ENCODE measurements at regions of chr20 and their contacts with region 1.

Region 1: GRCh38 chr20:41136680-41137613 is at the start of gene PLCG1:
- DNase-seq: peak; percentile 80 to 86 (median 83)
- H3K4me3 ChIP-seq: peak within 1 kb of the TSS; percentile 85
- H3K4me3 Mint-ChIP-seq: peak within 1 kb of the TSS; percentile 89 to 98 (median 94)
- H3K27ac ChIP-seq: peak within 1 kb of the TSS; percentile 80
- H3K27ac Mint-ChIP-seq: peak within 1 kb of the TSS; percentile 92 to 99 (median 96)
- H3K4me1 ChIP-seq: peaks cover 63% of the 10 kb centered on the region
- H3K4me1 Mint-ChIP-seq: peaks cover 57 to 66% (median 63%) of the 10 kb centered on the region in 3 donors
- H3K27me3 ChIP-seq: no peaks in the 10 kb centered on the region
- H3K27me3 Mint-ChIP-seq: peaks cover 0 to 4% of the 10 kb centered on the region in 2 donors
- total RNA-seq, gene PLCG1: 104 to 108 TPM

Region 2: DNA sequence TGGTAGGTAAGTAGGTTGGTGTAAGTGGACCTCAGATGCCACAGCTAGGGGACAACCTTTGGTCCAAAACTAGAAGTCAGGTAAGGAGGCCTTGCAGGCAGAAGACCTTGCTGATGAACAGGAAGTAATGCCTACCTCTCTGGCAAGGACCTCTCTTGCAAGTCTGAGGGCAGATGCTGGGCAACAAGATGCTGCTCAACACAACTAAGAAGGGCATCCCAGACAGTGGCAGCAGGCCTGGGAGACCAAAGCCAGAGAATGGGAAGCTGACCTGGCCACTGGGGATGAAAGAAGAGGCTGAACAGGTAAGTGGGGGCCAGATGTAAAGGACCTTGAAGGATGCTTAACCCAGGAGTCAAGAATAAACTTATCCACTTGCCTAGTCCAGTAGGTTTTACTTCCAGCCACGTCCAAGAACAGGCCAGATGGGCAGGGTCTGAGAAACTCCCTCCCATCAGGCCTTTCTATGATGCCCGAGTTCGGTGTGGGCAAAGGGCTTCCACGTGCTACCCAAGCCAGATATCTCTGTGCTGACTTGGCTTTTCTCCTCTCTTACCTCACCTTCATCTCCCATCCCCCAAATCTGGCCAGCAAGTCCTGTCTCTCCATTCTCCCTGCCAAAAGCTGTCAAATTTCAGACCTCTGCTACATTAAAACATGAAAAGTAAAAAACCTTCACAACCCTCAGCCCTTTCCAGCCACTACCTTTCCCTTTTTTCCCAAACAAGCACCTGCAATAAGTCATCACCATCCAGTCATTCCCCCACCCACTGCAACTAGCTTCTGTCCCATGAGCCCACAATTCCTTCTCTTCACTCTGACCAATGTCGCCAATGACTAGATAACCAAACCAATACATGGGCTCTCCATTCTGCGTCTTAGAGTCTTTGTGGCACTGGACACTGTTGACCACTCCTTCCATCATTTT is 11.2 kb before region 1 on chr20:
- CTCF ChIA-PET with region 1: interaction called, 12 read pairs
- POLR2A ChIA-PET with region 1: no interaction called
- DNase-seq: no peak
- H3K4me3 ChIP-seq: no peak overlapping the region
- H3K4me3 Mint-ChIP-seq: no peak overlapping the region
- H3K27ac ChIP-seq: no peak overlapping the region
- H3K27ac Mint-ChIP-seq: peak overlapping the region; percentile 1 to 59 (median 40)
- H3K4me1 ChIP-seq: no peaks in the 10 kb centered on the region
- H3K4me1 Mint-ChIP-seq: peaks cover 0 to 9% (median 7%) of the 10 kb centered on the region in 3 donors
- H3K27me3 ChIP-seq: no peaks in the 10 kb centered on the region
- H3K27me3 Mint-ChIP-seq: no peaks in the 10 kb centered on the region

Region 3: GRCh38 chr20:41173161-41173721 is 36.3 kb after region 1 on chr20:
- CTCF ChIA-PET with region 1: interaction called, 38 read pairs
- POLR2A ChIA-PET with region 1: interaction called, 5 read pairs
- DNase-seq: peak; percentile 43 to 69 (median 49)
- H3K4me3 ChIP-seq: no peak overlapping the region
- H3K4me3 Mint-ChIP-seq: no peak overlapping the region
- H3K27ac ChIP-seq: no peak overlapping the region
- H3K27ac Mint-ChIP-seq: peak overlapping the region; percentile 57 to 98 (median 82)
- H3K4me1 ChIP-seq: no peaks in the 10 kb centered on the region
- H3K4me1 Mint-ChIP-seq: peaks cover 25 to 32% (median 28%) of the 10 kb centered on the region in 3 donors
- H3K27me3 ChIP-seq: no peaks in the 10 kb centered on the region
- H3K27me3 Mint-ChIP-seq: no peaks in the 10 kb centered on the region

Region 4: DNA sequence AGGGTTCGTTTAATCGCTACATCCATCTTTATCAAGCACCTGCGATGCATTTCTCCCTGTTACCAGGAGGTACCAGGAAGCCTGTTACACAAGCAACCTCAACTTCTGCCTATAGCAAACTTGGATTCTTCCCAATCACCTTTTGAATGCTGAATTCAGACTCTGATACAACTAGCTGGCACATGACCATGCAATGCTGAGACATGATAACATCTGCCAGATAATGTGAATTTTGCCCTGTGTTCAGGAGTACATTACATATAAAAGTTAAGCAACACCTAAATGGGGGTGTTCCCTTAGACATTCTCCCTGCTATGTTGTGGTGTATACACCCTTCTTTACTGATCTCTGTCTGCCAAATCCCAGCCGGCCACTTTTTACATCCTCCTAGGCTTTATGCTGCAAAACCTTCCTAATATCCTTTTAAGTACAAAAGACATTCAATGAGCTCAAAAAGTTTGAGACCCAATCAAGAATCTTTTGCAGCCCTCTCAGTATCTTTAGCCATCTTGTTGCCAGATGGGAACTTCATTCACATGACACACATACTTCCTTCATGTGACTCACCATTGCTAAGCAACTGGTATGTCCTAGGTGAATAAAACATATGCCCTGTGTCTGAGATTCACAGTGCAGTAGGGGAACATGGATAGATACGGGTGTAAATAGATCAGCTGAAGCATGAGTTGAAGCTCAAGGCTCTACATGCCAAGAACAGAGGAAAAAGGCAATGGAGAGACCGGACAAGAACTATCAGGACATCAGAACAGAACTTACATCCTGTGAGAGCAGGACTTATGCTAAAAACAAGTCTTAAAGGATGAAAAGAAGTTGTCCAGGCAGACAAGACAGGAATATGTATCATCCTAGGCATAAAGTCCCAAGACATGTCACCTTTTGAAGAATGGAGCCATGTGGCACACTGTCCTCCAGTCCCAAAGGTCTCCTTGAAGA is 96.3 kb after region 1 on chr20:
- CTCF ChIA-PET with region 1: interaction called, 89 read pairs
- POLR2A ChIA-PET with region 1: interaction called, 5 read pairs
- DNase-seq: no peak
- H3K4me3 ChIP-seq: no peak overlapping the region
- H3K4me3 Mint-ChIP-seq: no peak overlapping the region
- H3K27ac ChIP-seq: no peak overlapping the region
- H3K27ac Mint-ChIP-seq: peak overlapping the region in 2 of 8 donors; percentile 5 to 29
- H3K4me1 ChIP-seq: peaks cover 7% of the 10 kb centered on the region
- H3K4me1 Mint-ChIP-seq: peaks cover 16 to 22% (median 18%) of the 10 kb centered on the region in 3 donors
- H3K27me3 ChIP-seq: no peaks in the 10 kb centered on the region
- H3K27me3 Mint-ChIP-seq: no peaks in the 10 kb centered on the region

Region 5: DNA sequence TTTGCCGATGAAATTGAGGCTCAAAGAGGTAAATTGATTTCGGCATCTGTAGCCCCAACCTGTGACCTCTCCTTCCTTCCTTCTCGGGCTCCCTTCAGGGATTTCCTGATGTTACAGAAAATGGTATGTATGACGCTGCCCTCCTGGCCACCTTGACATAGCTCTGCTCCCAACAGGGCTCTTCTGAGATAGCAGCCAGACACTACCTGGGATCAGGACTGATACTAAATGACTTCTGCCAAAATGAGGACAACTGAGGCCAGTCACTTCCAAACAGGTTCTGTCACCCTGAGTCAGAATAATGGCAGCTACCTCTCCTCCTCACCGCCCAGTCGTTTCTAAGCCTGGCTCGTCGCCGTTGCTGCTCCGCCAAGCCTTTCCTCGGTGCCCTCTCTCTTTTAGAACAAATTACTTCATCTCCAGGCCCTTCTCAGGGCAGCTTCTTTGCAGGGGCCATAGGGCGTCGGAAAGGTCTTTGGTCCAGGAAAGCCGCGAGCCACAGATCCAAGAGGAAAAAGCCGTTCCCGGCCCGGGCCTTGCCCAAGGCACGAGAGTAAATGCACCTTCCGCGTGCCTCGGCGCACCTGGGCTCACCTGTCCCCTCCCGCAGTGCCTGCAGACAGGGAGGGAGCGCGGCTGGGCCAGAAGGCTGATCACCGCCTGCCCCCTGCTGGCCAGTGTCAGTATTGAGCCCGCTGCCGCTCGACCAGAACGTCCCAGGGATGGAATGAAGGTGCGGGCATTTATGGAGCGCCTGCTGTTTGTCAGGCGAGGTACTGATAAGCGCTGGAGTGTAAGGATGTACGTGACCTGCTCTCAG is 202.8 kb after region 1 on chr20:
- CTCF ChIA-PET with region 1: interaction called, 82 read pairs
- POLR2A ChIA-PET with region 1: no interaction called
- DNase-seq: peak; percentile 74 to 86 (median 80)
- H3K4me3 ChIP-seq: peak overlapping the region; percentile 60
- H3K4me3 Mint-ChIP-seq: peak overlapping the region; percentile 14 to 88 (median 83)
- H3K27ac ChIP-seq: no peak overlapping the region
- H3K27ac Mint-ChIP-seq: peak overlapping the region in 4 of 8 donors; percentile 14 to 77 (median 36)
- H3K4me1 ChIP-seq: peaks cover 7% of the 10 kb centered on the region
- H3K4me1 Mint-ChIP-seq: peaks cover 9 to 11% (median 10%) of the 10 kb centered on the region in 3 donors
- H3K27me3 ChIP-seq: no peaks in the 10 kb centered on the region
- H3K27me3 Mint-ChIP-seq: peaks cover 8 to 19% of the 10 kb centered on the region in 2 donors

Measured in CD8-positive, alpha-beta memory T cell (primary cell).